Endothelial cell of umbilical vein (primary cell): ENCODE measurements at regions of chr2 and their contacts with region 1.

Region 1: GRCh38 chr2:177296040-177296439 is 31.5 kb upstream of the NFE2L2 start:
- DNase-seq: peak; percentile 67
- H3K4me3 ChIP-seq: no peak overlapping the region
- H3K27ac ChIP-seq: no peak overlapping the region
- H3K4me1 ChIP-seq: no peaks in the 10 kb centered on the region
- H3K27me3 ChIP-seq: no peaks in the 10 kb centered on the region
- CTCF ChIP-seq: peak; percentile 2 to 33
- POLR2A ChIP-seq: no peak

Region 2: GRCh38 chr2:177281400-177282180 is 14.4 kb before region 1 on chr2:
- CTCF ChIA-PET with region 1: interaction called, 14 read pairs
- POLR2A ChIA-PET with region 1: no interaction called
- dilution Hi-C with region 1: no loop called
- intact Hi-C with region 1: no loop called
- DNase-seq: no peak
- H3K4me3 ChIP-seq: no peak overlapping the region
- H3K27ac ChIP-seq: no peak overlapping the region
- H3K4me1 ChIP-seq: no peaks in the 10 kb centered on the region
- H3K27me3 ChIP-seq: no peaks in the 10 kb centered on the region
- CTCF ChIP-seq: no peak
- POLR2A ChIP-seq: no peak

Region 3: GRCh38 chr2:177445200-177445599 is 149.2 kb after region 1 on chr2:
- CTCF ChIA-PET with region 1: no interaction called
- POLR2A ChIA-PET with region 1: no interaction called
- dilution Hi-C with region 1: no loop called
- intact Hi-C with region 1: no loop called
- DNase-seq: peak; percentile 72
- H3K4me3 ChIP-seq: no peak overlapping the region
- H3K27ac ChIP-seq: no peak overlapping the region
- H3K4me1 ChIP-seq: peaks cover 12% of the 10 kb centered on the region
- H3K27me3 ChIP-seq: no peaks in the 10 kb centered on the region
- CTCF ChIP-seq: no peak
- POLR2A ChIP-seq: no peak